Panc1 (cell line): ENCODE measurements at regions of chr19 and their contacts with region 1.

Region 1: GRCh38 chr19:40392872-40393845 is 3.2 kb upstream of the HIPK4 start:
- DNase-seq: no peak
- ATAC-seq: peak; percentile 67
- H3K4me3 ChIP-seq: no peak overlapping the region
- H3K27ac ChIP-seq: no peak overlapping the region
- H3K4me1 ChIP-seq: no peaks in the 10 kb centered on the region
- H3K27me3 ChIP-seq: no peaks in the 10 kb centered on the region
- CTCF ChIP-seq: no peak

Region 2: DNA sequence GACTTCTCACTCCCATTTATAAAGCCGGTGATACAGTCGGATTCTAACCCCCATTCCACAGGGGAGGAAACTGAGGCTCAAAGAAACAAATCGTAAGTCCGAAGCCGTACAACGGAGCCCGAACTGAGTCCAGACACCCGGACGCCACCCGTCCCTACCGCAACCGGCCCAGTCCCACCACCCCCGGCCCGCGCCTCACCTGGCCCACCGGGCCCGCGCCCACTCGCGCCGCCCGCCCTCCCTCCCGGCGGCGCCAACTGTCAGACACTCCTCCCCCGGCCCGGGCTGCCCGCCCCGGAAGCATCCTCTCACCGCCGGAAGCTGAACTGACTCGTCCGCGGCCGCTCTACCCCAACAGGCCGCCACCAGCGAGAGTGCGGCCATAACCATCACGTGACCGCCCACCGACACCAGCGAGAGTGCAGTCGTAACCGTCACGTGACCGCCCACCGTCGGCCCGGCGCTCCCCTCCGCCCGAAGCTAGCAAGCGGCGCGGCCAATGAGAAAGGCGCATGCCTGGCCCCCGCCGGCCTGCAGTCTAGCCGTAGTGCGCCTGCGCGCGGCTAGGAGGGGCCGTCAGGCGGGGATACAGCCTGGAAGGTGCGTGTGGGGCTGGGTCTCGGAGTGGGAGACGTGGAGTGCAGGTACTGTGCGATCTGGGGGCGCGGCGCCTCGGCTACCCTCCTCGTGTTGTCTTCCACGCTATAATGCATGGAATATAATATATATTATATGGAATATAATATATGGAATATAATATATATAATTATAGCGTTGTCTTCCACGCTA is 44.8 kb before region 1 on chr19 and contains the starts of genes C19orf47 and PLD3:
- CTCF ChIA-PET with region 1: no interaction called
- POLR2A ChIA-PET with region 1: no interaction called
- in situ Hi-C with region 1: no loop called
- intact Hi-C with region 1: no loop called
- DNase-seq: peak; percentile 78
- ATAC-seq: peak; percentile 99
- H3K4me3 ChIP-seq: peak within 1 kb of the TSS; percentile 80 to 98
- H3K27ac ChIP-seq: peak within 1 kb of the TSS; percentile 85
- H3K4me1 ChIP-seq: peaks cover 3% of the 10 kb centered on the region; the same call in 1 of the 2 replicates
- H3K27me3 ChIP-seq: no peaks in the 10 kb centered on the region
- CTCF ChIP-seq: no peak
- total RNA-seq, gene C19orf47: 29.0 TPM
- total RNA-seq, gene PLD3: 81.8 TPM

Region 3: GRCh38 chr19:40403262-40403984 is 10.3 kb after region 1 on chr19:
- CTCF ChIA-PET with region 1: no interaction called
- POLR2A ChIA-PET with region 1: interaction called, 14 read pairs
- in situ Hi-C with region 1: no loop called
- intact Hi-C with region 1: no loop called
- DNase-seq: no peak
- ATAC-seq: peak; percentile 94
- H3K4me3 ChIP-seq: peak overlapping the region; percentile 55 to 61
- H3K27ac ChIP-seq: peak overlapping the region; percentile 52
- H3K4me1 ChIP-seq: no peaks in the 10 kb centered on the region
- H3K27me3 ChIP-seq: no peaks in the 10 kb centered on the region
- CTCF ChIP-seq: no peak